ENCODE measurements at regions of chr7 and their contacts with region 1.

Region 1: DNA sequence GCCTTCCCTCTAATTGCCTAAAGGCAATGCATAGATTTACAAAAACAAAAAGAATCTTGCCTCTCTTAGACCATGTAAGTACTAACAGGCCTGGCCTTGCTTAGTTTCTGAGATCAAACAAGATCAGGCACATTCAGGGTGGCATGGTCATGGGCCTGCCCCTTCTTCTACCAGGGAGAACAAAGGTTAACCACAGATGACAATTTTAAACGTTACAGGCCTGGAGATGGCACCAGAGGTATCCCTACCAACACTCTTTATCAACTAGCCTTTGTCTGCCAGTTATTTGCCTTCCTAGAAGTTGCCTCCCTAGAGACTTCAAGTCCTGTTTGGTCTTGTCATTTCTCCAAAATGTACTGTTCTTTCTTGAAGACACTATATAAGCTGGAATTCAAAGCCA is 252.6 kb downstream of the DOCK4 start:
- DNase-seq: no peak
- ATAC-seq: peak; percentile 79 to 94

Region 2: GRCh38 chr7:112132051-112132694 is 178.6 kb after region 1 on chr7:
- intact Hi-C with region 1: no loop called
- DNase-seq: no peak
- ATAC-seq: no peak

Region 3: DNA sequence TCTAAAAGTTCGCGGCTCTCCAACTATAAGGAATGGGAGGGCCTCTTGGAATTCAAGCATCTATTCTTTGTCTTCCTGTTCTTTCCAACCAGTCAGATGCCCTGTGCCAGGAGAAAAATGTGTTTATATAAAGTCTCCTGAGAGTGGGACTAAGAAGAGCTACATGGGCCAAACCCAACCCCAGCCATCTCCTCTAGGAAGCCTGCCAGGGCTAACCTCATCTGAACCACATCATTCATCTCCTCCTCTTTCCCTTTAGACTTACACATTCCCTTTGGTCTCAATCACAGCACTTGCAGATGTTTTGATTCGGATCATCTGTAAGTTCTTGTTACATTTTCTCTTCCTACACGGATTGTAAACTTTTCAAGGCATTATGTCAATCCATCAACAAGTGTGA is 190.0 kb after region 1 on chr7:
- intact Hi-C with region 1: loop called in 1 of 2 experiments (anchors 5 kb)
- DNase-seq: peak; percentile 47
- ATAC-seq: peak; percentile 70 to 86

Region 4: GRCh38 chr7:112398534-112398933 is 444.9 kb after region 1 on chr7:
- intact Hi-C with region 1: loop called in 1 of 2 experiments (anchors 10 kb)
- DNase-seq: no peak
- ATAC-seq: no peak

Measured in left cardiac atrium (tissue), 4 donors.